HCT116 (cell line): ENCODE measurements at regions of chr12 and their contacts with region 1.

Region 1: DNA sequence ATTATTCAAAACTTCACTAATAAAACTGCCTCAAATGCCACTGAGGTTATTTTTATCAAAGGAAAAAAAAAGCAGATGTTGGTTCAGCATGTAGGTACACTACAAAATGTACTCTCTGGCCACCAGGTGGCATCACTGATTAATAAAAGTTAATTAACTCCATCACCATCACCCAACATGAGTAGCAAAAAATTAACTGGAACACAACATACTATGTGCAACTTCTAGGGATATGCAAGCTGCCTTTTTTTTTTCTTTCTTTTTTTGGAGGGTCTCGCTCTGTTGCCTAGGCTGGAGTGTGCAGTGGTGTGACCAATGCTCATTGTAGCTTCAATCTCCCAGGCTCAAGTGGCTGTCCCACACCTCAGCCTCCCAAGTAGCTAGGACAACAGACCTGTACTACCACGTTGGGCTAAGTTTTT is 43.8 kb upstream of the NR2C1 start:
- DNase-seq: peak; percentile 64
- ATAC-seq: peak; percentile 80
- H3K4me3 ChIP-seq: peak overlapping the region in 1 of 2 experiments; percentile 23; a peak in 2 of 4 replicates
- H3K27ac ChIP-seq: peak overlapping the region; percentile 5; the same call in 1 of the 2 replicates
- H3K4me1 ChIP-seq: peaks cover 9 to 49% of the 10 kb centered on the region in 2 experiments
- H3K27me3 ChIP-seq: no peaks in the 10 kb centered on the region
- CTCF ChIP-seq: peak; percentile 47 to 91 (median 83)
- POLR2A ChIP-seq: no peak
- RAD21 ChIP-seq: peak; percentile 93

Region 2: DNA sequence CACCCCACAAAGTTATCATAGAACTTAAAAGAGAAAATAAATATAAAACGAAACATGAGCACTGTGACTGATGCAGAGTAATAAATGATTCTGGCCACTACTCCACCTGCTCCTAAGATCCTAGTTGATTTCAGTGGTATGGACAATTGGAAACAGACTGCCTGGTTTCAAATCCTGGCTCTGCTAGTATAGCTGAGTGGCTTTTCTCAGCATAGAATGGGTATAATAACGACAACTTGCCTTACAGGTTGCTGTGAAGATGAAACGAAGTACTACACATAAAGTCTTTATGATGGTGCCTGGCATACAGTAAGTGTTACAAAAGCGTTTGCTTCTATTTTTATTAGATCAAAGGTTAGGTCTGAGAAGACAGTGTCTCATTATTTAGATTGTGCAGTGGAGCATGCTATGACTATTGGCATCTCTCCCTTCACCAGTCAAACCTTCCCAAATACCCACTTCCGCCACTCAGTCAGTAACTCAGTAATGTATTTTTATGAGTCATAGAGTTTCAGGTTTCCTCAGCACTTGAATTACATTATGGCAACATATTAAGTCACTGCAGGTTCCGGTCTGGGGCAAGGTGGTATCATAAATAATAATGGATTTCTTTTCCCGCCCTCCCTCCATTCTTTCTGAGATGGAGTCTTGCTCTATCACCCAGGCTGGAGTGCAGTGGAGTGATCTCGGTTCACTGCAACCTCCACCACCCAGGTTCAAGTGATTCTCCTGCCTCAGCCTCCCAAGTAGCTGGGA is 14.1 kb before region 1 on chr12:
- CTCF ChIA-PET with region 1: interaction called, 13 read pairs
- POLR2A ChIA-PET with region 1: interaction called, 4 read pairs
- RAD21 ChIA-PET with region 1: no interaction called
- intact Hi-C with region 1: no loop called
- DNase-seq: peak; percentile 92
- ATAC-seq: peak; percentile 84
- H3K4me3 ChIP-seq: peak overlapping the region in 1 of 2 experiments; percentile 33; a peak in 3 of 4 replicates
- H3K27ac ChIP-seq: peak overlapping the region; percentile 59
- H3K4me1 ChIP-seq: peaks cover 28 to 64% of the 10 kb centered on the region in 2 experiments
- H3K27me3 ChIP-seq: no peaks in the 10 kb centered on the region
- CTCF ChIP-seq: no peak
- POLR2A ChIP-seq: no peak
- RAD21 ChIP-seq: peak; percentile 25; the same call in 1 of the 2 replicates

Region 3: GRCh38 chr12:95173392-95174251 is 56.4 kb after region 1 on chr12:
- CTCF ChIA-PET with region 1: no interaction called
- POLR2A ChIA-PET with region 1: no interaction called
- RAD21 ChIA-PET with region 1: no interaction called
- intact Hi-C with region 1: no loop called
- DNase-seq: no peak
- ATAC-seq: no peak
- H3K4me3 ChIP-seq: no peak overlapping the region
- H3K27ac ChIP-seq: no peak overlapping the region
- H3K4me1 ChIP-seq: peaks cover 15 to 49% of the 10 kb centered on the region in 2 experiments; a peak in 3 of 4 replicates
- H3K27me3 ChIP-seq: no peaks in the 10 kb centered on the region
- CTCF ChIP-seq: no peak
- POLR2A ChIP-seq: no peak
- RAD21 ChIP-seq: no peak

Region 4: DNA sequence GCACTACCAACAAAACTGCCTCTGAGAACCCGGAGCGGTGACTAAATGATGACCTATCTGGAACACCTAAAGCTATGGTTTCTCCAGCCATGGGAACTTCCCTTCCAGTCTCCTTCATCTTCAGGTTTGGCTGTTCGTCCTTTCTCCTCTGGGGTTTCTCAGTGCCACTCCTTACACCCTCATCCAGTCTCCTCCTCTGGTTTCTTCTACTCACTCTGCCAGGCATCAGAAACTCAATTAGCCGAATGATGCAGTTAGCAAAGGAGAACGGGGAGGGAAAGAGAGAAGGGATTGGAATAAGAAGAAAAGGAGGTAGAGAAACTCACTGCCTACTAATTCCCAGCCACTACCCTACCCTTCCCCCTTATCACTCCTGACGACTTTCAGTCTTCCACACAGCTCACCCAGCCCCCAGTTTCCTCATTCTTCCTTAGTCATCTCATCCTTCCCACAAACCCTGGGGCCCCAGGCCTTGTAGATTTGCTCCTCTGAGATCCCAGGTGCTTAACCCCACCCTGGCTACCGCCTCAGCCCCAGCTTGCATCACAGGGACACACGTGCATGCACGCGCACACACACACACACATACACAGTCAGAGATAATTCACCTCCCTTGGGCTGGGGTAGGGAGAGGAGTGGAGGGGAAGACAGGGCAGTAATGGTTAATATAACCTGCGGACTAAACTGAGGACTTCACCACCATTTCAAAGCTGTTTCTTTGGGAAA is 87.1 kb after region 1 on chr12:
- CTCF ChIA-PET with region 1: no interaction called
- POLR2A ChIA-PET with region 1: interaction called, 3 read pairs
- RAD21 ChIA-PET with region 1: no interaction called
- intact Hi-C with region 1: loop called (anchors 5 kb)
- DNase-seq: peak; percentile 96
- ATAC-seq: peak; percentile 85
- H3K4me3 ChIP-seq: peak overlapping the region; percentile 40 to 52
- H3K27ac ChIP-seq: peak overlapping the region; percentile 94
- H3K4me1 ChIP-seq: peaks cover 62 to 88% of the 10 kb centered on the region in 2 experiments
- H3K27me3 ChIP-seq: no peaks in the 10 kb centered on the region
- CTCF ChIP-seq: no peak
- POLR2A ChIP-seq: no peak
- RAD21 ChIP-seq: peak; percentile 54

Region 5: DNA sequence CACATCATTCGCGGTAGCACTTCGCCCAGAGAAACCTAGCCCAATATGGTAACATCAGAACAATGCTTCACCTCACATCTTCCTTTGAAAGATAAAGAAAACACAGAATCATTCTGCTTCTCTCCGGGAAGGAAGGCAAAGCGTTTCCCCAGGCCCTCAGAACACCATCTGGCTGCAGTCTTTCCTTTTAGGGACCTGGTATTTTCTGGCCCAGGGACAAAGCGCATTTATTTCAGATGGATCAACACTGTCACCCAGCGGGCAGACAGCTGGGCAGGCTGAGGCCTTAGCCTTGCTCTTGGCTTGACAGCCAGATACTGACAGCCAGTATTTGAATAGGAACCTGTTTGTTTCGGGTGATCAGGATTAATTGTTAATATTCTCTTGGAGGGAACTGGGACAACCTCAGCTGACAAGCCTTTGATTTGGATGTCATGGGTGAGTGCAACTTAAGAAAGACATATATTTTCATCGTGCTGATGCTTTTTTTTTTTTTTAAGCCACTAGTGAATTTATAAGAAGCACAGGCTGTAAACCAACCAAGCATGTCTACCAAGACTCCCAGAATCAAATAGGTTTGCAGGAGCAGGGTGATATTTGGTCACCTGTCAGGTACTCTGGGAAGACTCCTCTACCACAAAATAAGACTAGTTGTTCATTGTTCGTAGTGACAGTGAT is 219.3 kb after region 1 on chr12:
- CTCF ChIA-PET with region 1: interaction called, 7 read pairs
- POLR2A ChIA-PET with region 1: no interaction called
- RAD21 ChIA-PET with region 1: interaction called, 11 to 15 read pairs
- intact Hi-C with region 1: loop called (anchors 1 kb)
- DNase-seq: peak; percentile 65
- ATAC-seq: peak; percentile 57
- H3K4me3 ChIP-seq: no peak overlapping the region
- H3K27ac ChIP-seq: no peak overlapping the region
- H3K4me1 ChIP-seq: peaks cover 16 to 59% of the 10 kb centered on the region in 2 experiments
- H3K27me3 ChIP-seq: no peaks in the 10 kb centered on the region
- CTCF ChIP-seq: peak; percentile 82 to 91 (median 83)
- POLR2A ChIP-seq: no peak
- RAD21 ChIP-seq: peak; percentile 97